ENCODE measurements at regions of chr11 and their contacts with region 1.

Region 1: GRCh38 chr11:9363954-9364912 is 20.2 kb upstream of the IPO7 start:
- DNase-seq: peak; percentile 99

Region 2: DNA sequence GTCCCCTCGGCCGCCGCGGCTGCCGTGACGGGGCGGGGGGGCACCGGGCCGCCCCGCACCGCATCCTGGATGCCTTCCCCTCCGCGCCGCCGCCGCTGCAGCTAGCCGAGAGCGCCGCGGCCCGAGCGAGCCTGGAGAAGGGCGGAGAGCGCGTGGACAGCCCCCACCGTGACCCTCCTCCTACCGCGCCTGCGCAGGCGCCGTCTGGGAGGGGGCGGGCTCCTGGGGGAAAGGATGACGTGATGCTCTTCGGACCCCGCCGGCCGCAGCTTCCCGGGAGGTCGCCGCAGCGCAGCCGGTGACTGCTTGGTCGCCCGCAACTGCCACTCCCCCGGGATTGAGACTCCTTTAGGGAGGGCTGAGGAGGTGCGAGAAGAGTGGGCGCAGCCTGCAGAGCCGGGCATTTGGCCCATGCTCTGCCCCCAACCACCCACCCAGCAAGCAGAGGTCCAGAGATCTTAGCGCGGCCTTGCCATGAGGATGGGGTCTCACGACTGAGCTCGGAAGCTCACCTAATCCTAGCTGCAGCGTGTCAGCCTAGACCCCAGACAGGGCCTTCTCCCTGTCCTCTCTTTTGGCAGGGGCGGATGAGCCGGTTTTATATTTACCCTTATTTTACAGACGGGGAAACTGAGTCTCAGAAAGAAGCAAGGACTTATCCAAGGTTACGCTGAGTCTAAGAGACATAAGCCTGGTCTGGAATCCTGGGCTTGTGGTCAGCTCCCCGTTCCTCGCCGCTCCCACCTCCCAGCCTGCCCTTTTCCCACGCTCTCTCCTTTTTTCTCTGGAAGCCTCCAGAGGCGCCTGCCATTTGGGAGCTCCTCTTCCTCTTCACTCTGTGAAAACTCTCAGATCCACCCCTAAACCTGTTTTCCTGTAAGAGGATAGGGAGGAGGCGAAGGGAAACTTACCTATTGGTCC is 98.8 kb before region 1 on chr11 and contains the start of gene DENND5A:
- intact Hi-C with region 1: loop called in 1 of 2 experiments (anchors 10 kb)
- DNase-seq: peak; percentile 95
- total RNA-seq, gene DENND5A: 97.4 to 132 TPM

Region 3: GRCh38 chr11:9428706-9429105 is 64.5 kb after region 1 on chr11:
- intact Hi-C with region 1: no loop called
- DNase-seq: no peak

Measured in posterior vena cava (tissue), 2 donors.